Panc1 (cell line): ENCODE measurements at regions of chr1 and their contacts with region 1.

Region 1: DNA sequence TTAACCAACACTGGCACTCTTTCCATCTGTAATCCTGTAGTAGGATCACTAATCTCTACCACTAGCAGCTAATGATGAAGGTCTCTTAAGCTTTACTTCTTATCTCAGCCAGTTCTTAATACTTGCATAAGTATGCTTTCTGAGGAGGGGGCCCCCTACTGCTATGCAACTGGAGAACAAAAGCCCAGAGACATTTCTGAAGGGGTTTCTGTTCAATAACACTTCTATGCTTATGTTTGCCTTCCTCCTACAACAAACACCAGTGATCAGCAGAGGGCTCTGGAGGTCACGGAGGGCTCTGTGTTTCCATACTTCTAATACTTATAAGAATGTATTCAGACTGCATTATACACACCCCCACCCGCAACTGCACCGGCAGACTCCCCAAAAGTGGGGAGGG is 215.8 kb downstream of the BARHL2 start:
- DNase-seq: no peak
- ATAC-seq: no peak
- H3K4me3 ChIP-seq: no peak overlapping the region
- H3K27ac ChIP-seq: no peak overlapping the region
- H3K4me1 ChIP-seq: no peaks in the 10 kb centered on the region
- H3K27me3 ChIP-seq: no peaks in the 10 kb centered on the region
- CTCF ChIP-seq: no peak

Region 2: GRCh38 chr1:90296327-90296726 is 205.0 kb before region 1 on chr1:
- CTCF ChIA-PET with region 1: no interaction called
- POLR2A ChIA-PET with region 1: interaction called, 10 read pairs
- in situ Hi-C with region 1: no loop called
- intact Hi-C with region 1: no loop called
- DNase-seq: no peak
- ATAC-seq: no peak
- H3K4me3 ChIP-seq: no peak overlapping the region
- H3K27ac ChIP-seq: no peak overlapping the region
- H3K4me1 ChIP-seq: no peaks in the 10 kb centered on the region
- H3K27me3 ChIP-seq: no peaks in the 10 kb centered on the region
- CTCF ChIP-seq: no peak

Region 3: DNA sequence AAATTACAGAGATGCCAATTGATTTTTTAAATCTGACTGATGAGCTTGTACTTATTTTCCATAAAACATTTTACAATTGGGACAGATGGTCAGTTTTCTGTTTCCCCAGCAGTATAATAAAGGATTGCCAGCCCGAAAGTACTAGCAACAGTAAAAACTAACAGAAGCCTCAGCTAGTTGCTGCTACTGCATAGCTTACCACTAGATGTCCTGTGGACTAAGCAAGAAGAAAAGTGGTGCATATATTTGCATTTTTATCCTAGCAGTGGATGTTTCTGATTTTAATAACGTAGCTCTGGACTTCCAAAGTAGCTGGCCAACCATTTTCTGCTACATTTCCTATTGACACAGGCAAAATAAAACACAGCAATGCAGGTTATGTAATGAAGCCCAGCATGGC is 25.6 kb before region 1 on chr1:
- CTCF ChIA-PET with region 1: no interaction called
- POLR2A ChIA-PET with region 1: no interaction called
- in situ Hi-C with region 1: no loop called
- intact Hi-C with region 1: no loop called
- DNase-seq: peak; percentile 12
- ATAC-seq: no peak
- H3K4me3 ChIP-seq: no peak overlapping the region
- H3K27ac ChIP-seq: no peak overlapping the region
- H3K4me1 ChIP-seq: no peaks in the 10 kb centered on the region
- H3K27me3 ChIP-seq: no peaks in the 10 kb centered on the region; the same call in 1 of the 2 replicates
- CTCF ChIP-seq: peak; percentile 49; the same call in 1 of the 2 replicates

Region 4: GRCh38 chr1:90486996-90487395 is 14.3 kb before region 1 on chr1:
- CTCF ChIA-PET with region 1: interaction called, 10 read pairs
- POLR2A ChIA-PET with region 1: no interaction called
- in situ Hi-C with region 1: no loop called
- intact Hi-C with region 1: no loop called
- DNase-seq: no peak
- ATAC-seq: no peak
- H3K4me3 ChIP-seq: no peak overlapping the region
- H3K27ac ChIP-seq: no peak overlapping the region
- H3K4me1 ChIP-seq: no peaks in the 10 kb centered on the region
- H3K27me3 ChIP-seq: no peaks in the 10 kb centered on the region
- CTCF ChIP-seq: no peak